IMR-90 (cell line): ENCODE measurements at regions of chr20 and their contacts with region 1.

Region 1: GRCh38 chr20:2752567-2753460 is 47.6 kb downstream of the CPXM1 start:
- DNase-seq: peak; percentile 30
- ATAC-seq: peak; percentile 38
- H3K4me3 ChIP-seq: peak overlapping the region; percentile 30
- H3K27ac ChIP-seq: no peak overlapping the region
- H3K4me1 ChIP-seq: peaks cover 8% of the 10 kb centered on the region; the same call in 1 of the 2 replicates
- H3K27me3 ChIP-seq: peaks cover 60% of the 10 kb centered on the region
- CTCF ChIP-seq: peak; percentile 68
- POLR2A ChIP-seq: no peak
- RAD21 ChIP-seq: peak; percentile 44

Region 2: DNA sequence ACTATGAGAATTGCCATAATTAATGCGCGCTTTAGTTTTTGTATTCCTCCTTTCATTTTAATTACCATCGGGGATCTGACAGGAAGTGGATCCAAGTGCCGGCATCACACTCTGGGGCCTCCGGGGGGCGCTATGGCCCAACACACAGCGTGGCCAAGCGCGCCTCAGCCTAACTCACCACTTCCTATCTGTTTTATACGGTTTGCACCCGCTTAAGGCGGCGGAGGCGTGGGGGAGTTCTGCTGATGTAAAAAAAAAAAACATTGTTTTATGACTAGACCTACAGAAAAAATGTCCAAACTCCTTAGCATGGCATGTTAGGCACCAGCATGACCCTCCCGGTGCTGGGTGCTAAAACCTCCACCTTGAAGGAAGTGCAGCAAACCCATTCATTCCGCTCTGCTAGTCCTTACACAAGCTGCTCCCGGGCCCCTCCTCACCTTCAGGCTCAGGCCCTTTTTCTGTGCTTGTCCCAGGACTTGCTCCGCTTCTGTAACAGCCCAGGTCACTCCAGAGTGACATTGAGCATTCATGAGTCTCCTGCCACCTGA is 64.7 kb before region 1 on chr20:
- CTCF ChIA-PET with region 1: no interaction called
- POLR2A ChIA-PET with region 1: no interaction called
- dilution Hi-C with region 1: no loop called
- in situ Hi-C with region 1: no loop called
- intact Hi-C with region 1: loop called (anchors 1 kb)
- DNase-seq: peak; percentile 29
- ATAC-seq: peak; percentile 47; the same call in 1 of the 2 replicates
- H3K4me3 ChIP-seq: no peak overlapping the region
- H3K27ac ChIP-seq: no peak overlapping the region
- H3K4me1 ChIP-seq: no peaks in the 10 kb centered on the region
- H3K27me3 ChIP-seq: peaks cover 39% of the 10 kb centered on the region
- CTCF ChIP-seq: peak; percentile 68
- POLR2A ChIP-seq: no peak
- RAD21 ChIP-seq: peak; percentile 77

Region 3: DNA sequence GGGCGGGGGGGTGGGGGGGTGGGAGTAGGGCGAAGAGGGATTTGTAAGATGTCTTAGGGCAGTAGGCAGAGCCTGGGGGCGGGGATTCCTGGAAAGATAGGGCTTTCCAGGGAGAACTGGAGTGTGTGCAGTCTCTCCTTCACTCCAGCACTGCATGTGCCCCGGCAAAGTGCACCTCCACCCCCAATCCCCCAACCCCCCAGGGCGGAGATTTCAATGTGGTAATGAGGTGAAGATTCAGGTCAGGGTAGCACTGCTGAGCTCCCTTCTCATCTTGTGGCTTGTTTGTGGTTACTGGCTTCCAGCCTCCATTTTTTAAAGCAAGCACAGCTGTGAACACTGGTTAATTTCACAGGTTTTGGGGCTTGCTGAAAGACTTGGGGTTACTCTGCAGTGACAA is 69.3 kb after region 1 on chr20:
- CTCF ChIA-PET with region 1: no interaction called
- POLR2A ChIA-PET with region 1: no interaction called
- dilution Hi-C with region 1: no loop called
- in situ Hi-C with region 1: no loop called
- intact Hi-C with region 1: no loop called
- DNase-seq: peak; percentile 30
- ATAC-seq: peak; percentile 6
- H3K4me3 ChIP-seq: no peak overlapping the region
- H3K27ac ChIP-seq: no peak overlapping the region
- H3K4me1 ChIP-seq: peaks cover 22% of the 10 kb centered on the region
- H3K27me3 ChIP-seq: no peaks in the 10 kb centered on the region; the same call in 1 of the 2 replicates
- CTCF ChIP-seq: no peak
- POLR2A ChIP-seq: no peak
- RAD21 ChIP-seq: no peak

Region 4: DNA sequence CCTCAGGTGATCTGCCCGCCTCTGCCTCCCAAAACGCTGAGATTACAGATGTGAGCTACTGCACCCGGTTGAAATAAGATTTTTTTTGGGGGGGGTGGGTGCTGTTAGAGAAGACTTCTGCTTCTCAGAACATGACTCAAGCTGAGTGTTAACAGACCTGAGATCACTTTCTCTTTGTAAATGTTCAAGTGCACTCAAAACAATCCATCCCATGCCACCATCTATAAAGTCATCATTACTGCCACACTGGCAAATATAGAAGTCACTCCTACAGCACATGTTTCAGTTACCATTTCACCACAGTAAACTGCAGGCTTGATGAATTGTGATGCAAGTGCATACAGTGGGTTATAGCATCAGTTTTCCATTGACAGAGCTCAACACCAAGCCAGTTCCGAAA is 96.7 kb after region 1 on chr20:
- CTCF ChIA-PET with region 1: interaction called, 7 read pairs
- POLR2A ChIA-PET with region 1: no interaction called
- dilution Hi-C with region 1: no loop called
- in situ Hi-C with region 1: loop called (anchors 5 kb)
- intact Hi-C with region 1: loop called (anchors 1 kb)
- DNase-seq: no peak
- ATAC-seq: no peak
- H3K4me3 ChIP-seq: no peak overlapping the region
- H3K27ac ChIP-seq: no peak overlapping the region
- H3K4me1 ChIP-seq: peaks cover 3% of the 10 kb centered on the region; the same call in 1 of the 2 replicates
- H3K27me3 ChIP-seq: no peaks in the 10 kb centered on the region
- CTCF ChIP-seq: no peak
- POLR2A ChIP-seq: no peak
- RAD21 ChIP-seq: no peak

Region 5: GRCh38 chr20:2879146-2879545 is 126.3 kb after region 1 on chr20:
- CTCF ChIA-PET with region 1: no interaction called
- POLR2A ChIA-PET with region 1: no interaction called
- dilution Hi-C with region 1: no loop called
- in situ Hi-C with region 1: no loop called
- intact Hi-C with region 1: no loop called
- DNase-seq: peak; percentile 93
- ATAC-seq: peak; percentile 92
- H3K4me3 ChIP-seq: no peak overlapping the region
- H3K27ac ChIP-seq: no peak overlapping the region
- H3K4me1 ChIP-seq: peaks cover 7% of the 10 kb centered on the region; the same call in 1 of the 2 replicates
- H3K27me3 ChIP-seq: no peaks in the 10 kb centered on the region
- CTCF ChIP-seq: no peak
- POLR2A ChIP-seq: no peak
- RAD21 ChIP-seq: no peak

Region 6: DNA sequence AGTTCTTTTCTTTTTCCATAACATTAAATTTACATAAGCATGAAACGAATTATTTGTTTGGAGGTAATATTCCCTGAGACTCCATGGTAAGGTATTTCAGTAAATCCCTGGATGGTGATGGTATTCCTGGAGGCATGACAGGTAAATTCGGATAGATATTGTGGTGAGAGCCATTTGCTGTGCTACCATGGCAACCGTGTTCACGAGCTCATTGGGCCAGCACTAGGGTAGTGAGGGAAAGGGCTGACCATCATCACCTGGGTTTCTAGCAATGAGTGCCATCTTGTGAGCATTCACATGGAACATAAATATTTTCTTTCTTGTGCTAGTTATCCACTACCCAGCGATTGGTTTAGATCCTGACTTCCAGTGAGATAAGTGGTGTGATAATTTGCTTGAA is 238.7 kb after region 1 on chr20:
- CTCF ChIA-PET with region 1: no interaction called
- POLR2A ChIA-PET with region 1: no interaction called
- dilution Hi-C with region 1: no loop called
- in situ Hi-C with region 1: loop called (anchors 10 kb)
- intact Hi-C with region 1: no loop called
- DNase-seq: no peak
- ATAC-seq: no peak
- H3K4me3 ChIP-seq: no peak overlapping the region
- H3K27ac ChIP-seq: no peak overlapping the region
- H3K4me1 ChIP-seq: no peaks in the 10 kb centered on the region
- H3K27me3 ChIP-seq: no peaks in the 10 kb centered on the region
- CTCF ChIP-seq: no peak
- POLR2A ChIP-seq: no peak
- RAD21 ChIP-seq: no peak